Dorsolateral prefrontal cortex (tissue), 120 donors: ENCODE measurements at regions of chr1 and their contacts with region 1.

Region 1: DNA sequence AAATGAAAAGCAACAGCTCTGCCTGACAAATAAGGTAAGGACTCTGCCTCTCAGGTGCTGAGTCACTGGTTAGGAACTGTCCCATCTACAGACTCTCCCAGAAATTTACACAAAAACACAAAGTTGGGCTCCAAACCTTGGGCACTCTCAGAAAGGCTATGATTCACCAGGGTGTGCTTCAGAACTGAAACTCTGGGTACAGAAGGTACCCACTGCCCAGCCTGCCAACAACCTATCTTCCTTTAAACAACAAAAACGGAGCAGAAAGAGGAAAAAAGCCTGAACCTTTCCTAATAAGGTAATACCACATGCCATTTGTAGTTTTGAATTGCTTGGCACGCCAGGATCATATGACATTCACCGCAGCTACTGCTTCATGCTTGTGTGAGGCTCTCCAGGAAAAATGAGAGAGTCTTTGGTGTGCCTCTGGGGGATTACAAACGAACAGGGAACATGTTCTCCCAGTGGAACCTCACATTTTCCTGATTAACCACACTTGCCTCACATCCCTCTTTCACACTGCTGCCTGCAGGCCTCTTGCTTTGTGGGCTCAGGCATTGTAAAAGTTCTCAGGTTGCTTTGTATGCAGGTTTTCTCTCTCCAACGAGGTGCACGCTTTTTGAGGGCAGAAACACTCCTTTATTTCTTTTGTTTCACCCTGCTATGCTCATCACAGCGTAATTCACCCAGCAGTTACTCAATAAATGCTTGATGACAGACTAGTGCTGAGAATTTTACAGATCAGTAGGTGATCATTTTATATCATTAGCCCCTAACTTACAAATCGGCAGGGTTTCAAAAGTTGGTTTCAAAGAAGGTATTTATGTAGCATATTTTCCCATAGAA is 65.1 kb downstream of the GADD45A start:
- DNase-seq: no peak
- H3K4me3 ChIP-seq: no peak overlapping the region
- H3K27ac ChIP-seq: peak overlapping the region in 25 of 59 donors; percentile 2 to 74 (median 36)
- H3K27me3 ChIP-seq: no peaks in the 10 kb centered on the region
- CTCF ChIP-seq: no peak

Region 2: GRCh38 chr1:67552336-67552759 is 197.7 kb before region 1 on chr1:
- intact Hi-C with region 1: loop called in 1 of 2 experiments (anchors 5 kb)
- DNase-seq: no peak
- H3K4me3 ChIP-seq: no peak overlapping the region
- H3K27ac ChIP-seq: no peak overlapping the region
- H3K27me3 ChIP-seq: peaks cover 0 to 9% (median 0%) of the 10 kb centered on the region in 45 donors
- CTCF ChIP-seq: no peak